Activated CD4-positive, alpha-beta T cell treated with anti-CD3 and anti-CD28 coated beads, Interleukin-2, amount 10 ng/mL, durations not matched to agents 24 days and 14 days (primary cell): ENCODE measurements at regions of chr6 and their contacts with region 1.

Region 1: GRCh38 chr6:137415127-137415833 is 78.9 kb downstream of the OLIG3 start:
- DNase-seq: peak; percentile 90
- H3K4me3 Mint-ChIP-seq: peak overlapping the region; percentile 79
- H3K27ac Mint-ChIP-seq: peak overlapping the region; percentile 38
- H3K4me1 Mint-ChIP-seq: peaks cover 9% of the 10 kb centered on the region
- H3K27me3 Mint-ChIP-seq: peaks cover 24% of the 10 kb centered on the region

Region 2: DNA sequence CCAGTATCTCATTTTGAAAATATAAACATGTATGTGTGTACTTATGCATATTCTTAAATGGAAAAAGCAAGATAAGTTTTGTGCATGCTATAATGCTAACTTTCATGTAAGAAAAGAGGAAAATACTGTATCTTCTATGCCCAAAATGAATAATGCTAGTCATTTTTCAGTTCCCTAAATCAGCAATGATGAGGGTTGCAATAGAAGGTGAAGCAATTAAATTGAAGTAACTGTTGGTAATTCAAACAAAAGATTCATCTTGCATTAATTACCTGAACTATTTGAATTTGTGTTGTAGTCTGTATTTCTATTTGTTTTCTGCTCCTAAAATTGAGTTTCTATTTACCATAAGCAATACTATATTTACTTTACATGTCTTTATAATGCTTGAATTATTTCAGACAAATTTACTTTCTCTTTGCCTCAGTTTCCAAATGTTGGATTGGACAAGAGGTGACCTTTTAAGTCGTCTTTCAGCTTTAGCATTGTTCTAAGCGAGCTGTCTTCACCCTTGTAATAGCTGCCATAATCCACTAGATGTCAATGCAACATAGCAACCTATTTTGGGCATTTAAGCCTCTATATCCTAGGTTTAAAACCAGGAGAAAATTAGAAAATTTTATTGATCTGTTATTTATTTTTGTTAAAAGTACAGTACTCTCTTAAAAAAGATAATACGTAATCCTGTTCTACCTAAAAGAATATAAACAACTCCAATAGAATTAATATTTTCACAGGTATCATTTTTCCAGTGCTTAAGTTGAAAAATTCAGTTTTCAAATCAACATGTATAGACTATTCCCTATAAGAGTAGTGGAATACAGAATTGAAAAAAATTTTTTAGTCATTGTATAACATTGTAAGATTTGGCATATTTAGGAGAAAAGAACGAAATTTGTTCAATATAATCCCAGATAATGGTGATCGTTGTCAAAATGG is 143.8 kb before region 1 on chr6:
- intact Hi-C with region 1: loop called (anchors 2 kb)
- DNase-seq: peak; percentile 64
- H3K4me3 Mint-ChIP-seq: no peak overlapping the region
- H3K27ac Mint-ChIP-seq: no peak overlapping the region
- H3K4me1 Mint-ChIP-seq: peaks cover 2% of the 10 kb centered on the region
- H3K27me3 Mint-ChIP-seq: peaks cover 27% of the 10 kb centered on the region